ENCODE measurements at regions of chr17 and their contacts with region 1.

Region 1: GRCh38 chr17:55527540-55528118 is 16.4 kb upstream of the SMIM36 start:
- DNase-seq: peak; percentile 39
- ATAC-seq: peak; percentile 65
- H3K4me3 ChIP-seq: no peak overlapping the region
- H3K27ac ChIP-seq: no peak overlapping the region
- H3K4me1 ChIP-seq: no peaks in the 10 kb centered on the region
- H3K27me3 ChIP-seq: peaks cover 0 to 4% of the 10 kb centered on the region in 2 experiments; a peak in 1 of 5 replicates
- CTCF ChIP-seq: peak; percentile 72
- EP300 ChIP-seq: no peak
- POLR2A ChIP-seq: no peak
- RAD21 ChIP-seq: peak; percentile 31; the same call in 1 of the 2 replicates

Region 2: DNA sequence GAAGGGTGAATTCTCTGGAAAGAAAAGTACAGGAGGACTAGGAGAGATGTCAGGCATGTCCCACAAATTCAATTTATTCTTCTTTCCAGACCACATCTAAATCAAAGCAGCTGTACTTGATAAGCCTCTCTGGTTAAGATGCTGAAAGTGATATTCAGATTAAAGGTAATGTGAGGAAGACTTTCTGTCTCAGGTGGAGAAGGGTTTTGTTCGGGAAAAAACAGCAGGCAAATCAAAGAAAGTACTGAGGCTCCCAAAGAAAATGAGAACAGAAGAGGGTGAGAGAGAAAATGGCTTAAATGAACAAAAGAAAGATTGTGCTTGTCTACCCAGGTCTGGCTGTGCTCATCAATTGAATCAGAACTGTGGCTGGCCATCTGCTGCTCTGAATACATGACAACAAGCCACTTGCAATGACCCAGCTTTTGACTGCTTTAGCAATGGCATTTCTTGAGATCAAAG is 161.6 kb before region 1 on chr17:
- CTCF ChIA-PET with region 1: no interaction called
- POLR2A ChIA-PET with region 1: no interaction called
- in situ Hi-C with region 1: no loop called
- intact Hi-C with region 1: no loop called
- DNase-seq: no peak
- ATAC-seq: no peak
- H3K4me3 ChIP-seq: no peak overlapping the region
- H3K27ac ChIP-seq: no peak overlapping the region
- H3K4me1 ChIP-seq: 0 out of 2 replicates have a peak, but pooled peaks cover 4% of the 10 kb centered on the region
- H3K27me3 ChIP-seq: peaks cover 0 to 6% of the 10 kb centered on the region in 2 experiments; a peak in 1 of 5 replicates
- CTCF ChIP-seq: no peak
- EP300 ChIP-seq: no peak
- POLR2A ChIP-seq: no peak
- RAD21 ChIP-seq: no peak

Region 3: DNA sequence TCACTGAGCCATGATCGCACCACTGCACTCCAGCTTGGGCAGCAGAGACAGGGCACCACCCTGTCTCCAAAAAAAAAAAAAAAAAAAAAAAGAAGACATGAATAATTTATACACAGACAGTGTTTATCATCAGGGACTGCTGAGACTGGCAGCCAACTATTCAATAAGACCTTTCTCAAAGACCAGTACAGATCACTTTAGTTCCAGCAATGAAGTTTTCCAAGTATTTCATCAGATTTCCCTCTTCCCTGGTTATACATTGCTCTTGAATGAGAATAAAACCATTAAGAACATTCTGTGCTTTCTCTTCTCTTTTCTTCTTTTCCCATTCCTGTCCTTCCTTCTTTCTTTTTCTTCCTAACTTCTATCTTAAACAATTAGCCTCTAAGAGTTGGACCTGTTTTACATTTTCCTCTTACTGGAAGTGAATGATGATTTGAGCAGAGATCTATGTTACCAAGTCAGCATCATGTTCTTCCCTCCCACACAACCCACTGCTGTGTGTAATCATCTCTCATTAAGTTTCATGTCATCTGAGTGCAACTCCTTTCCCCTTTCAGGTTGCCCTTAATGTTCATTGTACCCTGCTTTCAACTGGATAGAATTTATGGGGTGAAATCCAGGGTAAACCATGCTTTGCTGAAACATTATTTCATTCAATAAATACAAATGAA is 19.5 kb after region 1 on chr17:
- CTCF ChIA-PET with region 1: no interaction called
- POLR2A ChIA-PET with region 1: no interaction called
- in situ Hi-C with region 1: no loop called
- intact Hi-C with region 1: no loop called
- DNase-seq: no peak
- ATAC-seq: no peak
- H3K4me3 ChIP-seq: no peak overlapping the region
- H3K27ac ChIP-seq: no peak overlapping the region
- H3K4me1 ChIP-seq: no peaks in the 10 kb centered on the region
- H3K27me3 ChIP-seq: peaks cover 0 to 7% of the 10 kb centered on the region in 2 experiments; a peak in 2 of 5 replicates
- CTCF ChIP-seq: no peak
- EP300 ChIP-seq: no peak
- POLR2A ChIP-seq: no peak
- RAD21 ChIP-seq: no peak

Region 4: GRCh38 chr17:55641676-55642081 is 114.0 kb after region 1 on chr17:
- CTCF ChIA-PET with region 1: interaction called, 9 read pairs
- POLR2A ChIA-PET with region 1: no interaction called
- in situ Hi-C with region 1: no loop called
- intact Hi-C with region 1: loop called (anchors 1 kb)
- DNase-seq: peak; percentile 58
- ATAC-seq: peak; percentile 90
- H3K4me3 ChIP-seq: no peak overlapping the region
- H3K27ac ChIP-seq: no peak overlapping the region
- H3K4me1 ChIP-seq: peaks cover 6% of the 10 kb centered on the region; the same call in 1 of the 2 replicates
- H3K27me3 ChIP-seq: no peaks in the 10 kb centered on the region
- CTCF ChIP-seq: peak; percentile 68
- EP300 ChIP-seq: no peak
- POLR2A ChIP-seq: no peak
- RAD21 ChIP-seq: no peak

Region 5: GRCh38 chr17:55735731-55736405 is 208.2 kb after region 1 on chr17:
- CTCF ChIA-PET with region 1: interaction called, 11 read pairs
- POLR2A ChIA-PET with region 1: no interaction called
- in situ Hi-C with region 1: no loop called
- intact Hi-C with region 1: loop called (anchors 1 kb)
- DNase-seq: peak; percentile 54
- ATAC-seq: peak; percentile 74
- H3K4me3 ChIP-seq: no peak overlapping the region
- H3K27ac ChIP-seq: no peak overlapping the region
- H3K4me1 ChIP-seq: peaks cover 11% of the 10 kb centered on the region
- H3K27me3 ChIP-seq: peaks cover 0 to 15% of the 10 kb centered on the region in 2 experiments; a peak in 1 of 5 replicates
- CTCF ChIP-seq: peak; percentile 69
- EP300 ChIP-seq: no peak
- POLR2A ChIP-seq: no peak
- RAD21 ChIP-seq: no peak

Region 6: GRCh38 chr17:55825213-55825612 is 297.6 kb after region 1 on chr17:
- CTCF ChIA-PET with region 1: interaction called, 7 read pairs
- POLR2A ChIA-PET with region 1: no interaction called
- in situ Hi-C with region 1: no loop called
- intact Hi-C with region 1: loop called (anchors 1 kb)
- DNase-seq: peak; percentile 10
- ATAC-seq: peak; percentile 60; the same call in 2 of the 3 replicates
- H3K4me3 ChIP-seq: no peak overlapping the region
- H3K27ac ChIP-seq: no peak overlapping the region
- H3K4me1 ChIP-seq: no peaks in the 10 kb centered on the region
- H3K27me3 ChIP-seq: no peaks in the 10 kb centered on the region; a peak in 1 of 5 replicates
- CTCF ChIP-seq: peak; percentile 72
- EP300 ChIP-seq: no peak
- POLR2A ChIP-seq: no peak
- RAD21 ChIP-seq: peak; percentile 28; the same call in 1 of the 2 replicates

Region 7: GRCh38 chr17:56478836-56479447 is 951.3 kb after region 1 on chr17:
- CTCF ChIA-PET with region 1: interaction called, 15 read pairs
- POLR2A ChIA-PET with region 1: no interaction called
- in situ Hi-C with region 1: no loop called
- intact Hi-C with region 1: no loop called
- DNase-seq: peak; percentile 41
- ATAC-seq: peak; percentile 73
- H3K4me3 ChIP-seq: no peak overlapping the region
- H3K27ac ChIP-seq: no peak overlapping the region
- H3K4me1 ChIP-seq: no peaks in the 10 kb centered on the region
- H3K27me3 ChIP-seq: no peaks in the 10 kb centered on the region
- CTCF ChIP-seq: peak; percentile 59
- EP300 ChIP-seq: no peak
- POLR2A ChIP-seq: no peak
- RAD21 ChIP-seq: no peak